ENCODE measurements at regions of chr5 and their contacts with region 1.

Region 1: GRCh38 chr5:96868603-96869371 is 7.5 kb upstream of the ERAP2 start:
- DNase-seq: no peak
- H3K4me3 ChIP-seq: no peak overlapping the region
- H3K27ac ChIP-seq: no peak overlapping the region
- H3K4me1 ChIP-seq: no peaks in the 10 kb centered on the region
- H3K27me3 ChIP-seq: no peaks in the 10 kb centered on the region
- CTCF ChIP-seq: peak in 2 of 3 experiments; percentile 50 to 71
- POLR2A ChIP-seq: no peak

Region 2: DNA sequence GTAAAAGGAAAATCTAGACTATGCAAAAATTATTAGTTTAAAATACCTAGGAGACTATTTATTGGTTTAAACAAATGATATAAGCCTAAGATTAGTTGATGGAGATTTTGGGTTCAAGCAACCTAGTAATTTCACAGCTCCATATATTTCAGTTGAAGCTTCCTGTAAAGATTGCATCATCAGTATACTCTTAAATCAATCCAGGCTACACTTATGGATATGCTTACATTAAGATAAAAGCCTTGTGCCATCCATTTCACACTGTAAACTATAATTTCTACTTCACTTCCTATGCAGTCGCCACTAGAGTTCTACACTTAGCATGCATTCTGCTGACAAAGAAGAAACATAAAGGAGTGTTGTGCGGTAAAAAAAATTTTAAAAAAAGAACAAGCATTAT is 280.9 kb after region 1 on chr5:
- intact Hi-C with region 1: loop called (anchors 10 kb)
- DNase-seq: no peak
- H3K4me3 ChIP-seq: no peak overlapping the region
- H3K27ac ChIP-seq: no peak overlapping the region
- H3K4me1 ChIP-seq: no peaks in the 10 kb centered on the region
- H3K27me3 ChIP-seq: no peaks in the 10 kb centered on the region
- CTCF ChIP-seq: no peak
- POLR2A ChIP-seq: no peak